ENCODE measurements at regions of chr17 and their contacts with region 1.

Region 1: GRCh38 chr17:1122533-1123392 is 57.0 kb downstream of the ABR start:
- DNase-seq: no peak
- H3K4me3 ChIP-seq: no peak overlapping the region
- H3K27me3 ChIP-seq: no peaks in the 10 kb centered on the region
- CTCF ChIP-seq: peak; percentile 92

Region 2: GRCh38 chr17:1067282-1067956 is 55.3 kb before region 1 on chr17:
- CTCF ChIA-PET with region 1: no interaction called
- POLR2A ChIA-PET with region 1: no interaction called
- DNase-seq: no peak
- H3K4me3 ChIP-seq: no peak overlapping the region
- H3K27me3 ChIP-seq: no peaks in the 10 kb centered on the region
- CTCF ChIP-seq: no peak

Region 3: GRCh38 chr17:1110862-1111598 is 11.7 kb before region 1 on chr17:
- CTCF ChIA-PET with region 1: interaction called, 13 read pairs
- POLR2A ChIA-PET with region 1: no interaction called
- DNase-seq: peak; percentile 48
- H3K4me3 ChIP-seq: no peak overlapping the region
- H3K27me3 ChIP-seq: no peaks in the 10 kb centered on the region
- CTCF ChIP-seq: no peak

Region 4: GRCh38 chr17:1137465-1137894 is 14.7 kb after region 1 on chr17:
- CTCF ChIA-PET with region 1: interaction called, 27 read pairs
- POLR2A ChIA-PET with region 1: no interaction called
- DNase-seq: no peak
- H3K4me3 ChIP-seq: no peak overlapping the region
- H3K27me3 ChIP-seq: 0 out of 2 replicates have a peak, but pooled peaks cover 1% of the 10 kb centered on the region
- CTCF ChIP-seq: no peak

Region 5: GRCh38 chr17:1147661-1148060 is 24.9 kb after region 1 on chr17:
- CTCF ChIA-PET with region 1: interaction called, 17 read pairs
- POLR2A ChIA-PET with region 1: no interaction called
- DNase-seq: no peak
- H3K4me3 ChIP-seq: no peak overlapping the region
- H3K27me3 ChIP-seq: no peaks in the 10 kb centered on the region
- CTCF ChIP-seq: peak; percentile 41

Region 6: DNA sequence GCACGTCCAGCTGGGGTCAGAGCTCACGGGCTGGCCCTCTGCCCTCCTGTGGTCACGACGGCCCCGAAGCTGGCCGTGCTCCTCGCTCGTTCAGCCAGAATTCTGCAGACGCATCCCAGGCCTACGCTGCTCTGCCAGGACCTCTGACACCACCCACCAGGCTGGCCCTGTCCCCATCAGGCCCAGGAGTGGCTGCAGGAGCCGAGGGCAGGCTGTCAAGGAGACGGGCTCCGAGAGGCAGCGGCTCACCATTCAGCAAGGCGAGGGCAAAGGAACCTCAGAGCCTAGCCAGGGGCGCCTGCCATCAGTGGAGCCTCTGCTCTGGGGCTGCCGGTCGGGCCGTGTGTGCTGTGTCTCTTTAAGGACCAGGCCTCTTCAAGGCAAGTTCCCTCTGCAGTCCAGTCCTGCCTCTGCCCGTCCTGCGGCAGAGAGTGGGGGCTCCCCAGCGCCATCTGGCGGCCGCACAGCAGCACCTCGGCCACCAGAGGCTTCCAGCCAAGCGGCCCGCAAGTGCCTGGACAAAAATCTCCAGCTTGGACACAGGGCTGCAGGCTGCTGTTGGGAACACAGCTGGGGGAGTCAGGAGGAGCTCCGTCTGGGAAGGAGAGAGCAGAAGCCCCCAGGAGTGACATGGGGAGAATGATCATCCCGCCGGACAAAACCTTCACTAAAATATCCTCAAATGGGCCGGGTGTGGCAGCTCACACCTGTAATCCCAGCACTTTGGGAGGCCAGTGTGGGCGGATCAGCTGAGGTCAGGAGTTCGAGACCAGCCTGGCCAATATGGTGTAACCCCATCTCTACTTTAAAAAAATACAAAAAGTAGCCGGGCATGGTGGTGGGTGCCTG is 64.4 kb after region 1 on chr17:
- CTCF ChIA-PET with region 1: interaction called, 169 read pairs
- POLR2A ChIA-PET with region 1: no interaction called
- DNase-seq: peak; percentile 31
- H3K4me3 ChIP-seq: no peak overlapping the region
- H3K27me3 ChIP-seq: peaks cover 8% of the 10 kb centered on the region
- CTCF ChIP-seq: peak; percentile 100